Right ventricle myocardium inferior (tissue), 1 donor: ENCODE measurements at regions of chr6 and their contacts with region 1.

Region 1: DNA sequence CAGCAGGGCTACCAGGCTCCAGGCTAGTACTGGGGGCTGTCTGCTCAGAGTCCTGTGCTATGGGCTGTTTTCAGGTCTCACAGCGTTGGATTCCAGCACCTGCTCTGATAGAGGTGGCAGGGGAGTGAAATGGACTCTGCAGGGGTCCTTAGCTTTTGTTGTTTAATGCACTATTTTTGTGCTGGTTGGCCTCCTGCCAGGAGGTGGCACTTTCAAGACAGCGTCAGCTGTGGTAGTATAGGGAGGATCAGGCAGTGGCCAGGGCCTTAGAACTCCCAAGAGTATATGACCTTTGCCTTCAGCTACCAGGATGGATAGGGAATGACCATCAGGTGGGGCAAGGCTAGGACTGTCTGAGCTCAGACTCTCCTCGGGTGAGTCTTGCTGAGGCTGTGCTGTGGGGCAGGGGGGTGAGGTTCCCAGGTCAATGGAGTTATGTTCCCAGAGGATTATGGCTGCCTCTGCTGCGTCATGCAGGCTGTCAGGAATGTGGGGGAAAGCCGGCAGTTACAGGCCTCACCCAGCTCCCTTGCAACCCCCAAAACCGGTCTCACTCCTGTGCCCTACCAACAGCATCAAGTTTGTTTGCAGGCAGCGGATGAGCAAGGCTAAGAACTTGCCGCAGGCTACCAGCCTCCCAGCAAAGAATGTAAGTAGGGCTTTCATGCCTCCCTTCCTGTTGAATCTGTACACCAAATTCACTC is 93.4 kb downstream of the ESR1 start:
- DNase-seq: no peak
- ATAC-seq: no peak

Region 2: DNA sequence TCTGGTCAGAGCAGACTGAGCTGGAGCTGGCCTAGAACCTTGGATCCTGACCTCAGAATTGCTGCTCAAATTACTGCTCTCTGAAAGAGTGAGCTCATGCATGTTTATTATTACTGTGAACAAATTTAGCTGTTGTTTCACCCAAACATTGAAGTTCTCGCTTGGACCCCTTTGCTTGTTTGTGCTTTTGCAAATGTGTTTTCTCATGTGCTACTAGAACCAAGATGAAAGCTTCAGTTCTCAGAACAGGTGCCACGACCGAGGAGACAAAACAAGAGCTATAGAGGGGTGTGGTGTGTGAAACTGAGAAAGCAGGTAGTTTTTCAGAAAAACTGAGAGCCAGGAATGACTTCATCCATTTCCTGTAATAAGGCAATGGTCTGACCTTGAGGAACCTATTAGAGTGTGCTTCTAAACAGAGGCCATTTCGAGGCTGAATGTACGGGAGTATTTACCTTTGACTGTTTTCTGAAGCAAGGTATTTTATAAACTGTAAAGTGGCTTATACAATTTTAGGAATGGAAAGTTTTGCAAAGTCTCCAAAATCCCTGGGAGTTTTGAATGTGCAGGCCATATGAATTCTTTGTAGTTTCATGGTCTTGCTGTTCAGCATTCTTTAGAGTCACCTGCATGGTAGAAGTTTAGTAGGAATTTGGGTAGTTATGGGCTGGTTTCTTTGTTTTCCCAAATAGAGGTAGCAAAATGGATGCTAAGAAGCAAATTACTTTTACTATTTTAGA is 143.2 kb before region 1 on chr6:
- intact Hi-C with region 1: no loop called
- DNase-seq: no peak
- ATAC-seq: no peak

Region 3: GRCh38 chr6:151822260-151823111 is 78.4 kb before region 1 on chr6:
- intact Hi-C with region 1: loop called (anchors 10 kb)
- DNase-seq: no peak
- ATAC-seq: no peak

Region 4: DNA sequence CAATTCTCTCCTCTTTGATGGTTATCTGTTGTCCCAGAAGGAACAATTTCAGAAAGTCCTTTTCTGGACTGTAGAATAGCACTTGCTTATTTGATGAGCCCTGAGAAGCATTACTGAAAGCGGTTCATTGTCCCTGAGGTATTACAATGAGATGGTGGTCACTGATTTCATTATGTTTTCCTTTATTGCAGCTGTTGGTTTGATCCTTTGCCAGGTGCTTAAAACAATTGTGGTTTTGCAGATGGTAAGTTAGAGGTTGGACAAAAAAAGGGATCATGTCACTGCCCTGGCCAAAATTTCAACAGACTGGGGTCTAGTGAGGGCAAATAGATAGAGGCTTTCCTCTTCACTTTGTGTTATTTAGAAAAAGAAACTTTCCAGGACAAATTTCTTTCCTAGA is 31.5 kb before region 1 on chr6:
- intact Hi-C with region 1: no loop called
- DNase-seq: no peak
- ATAC-seq: peak; percentile 31